Natural killer cell (primary cell): ENCODE measurements at regions of chr18 and their contacts with region 1.

Region 1: GRCh38 chr18:48777026-48777743 is 173.6 kb downstream of the SMAD7 start:
- DNase-seq: peak; percentile 76 to 85
- ATAC-seq: peak; percentile 82 to 96 (median 94)
- H3K4me3 ChIP-seq: no peak overlapping the region
- H3K4me3 Mint-ChIP-seq: no peak overlapping the region
- H3K27ac ChIP-seq: no peak overlapping the region
- H3K27ac Mint-ChIP-seq: peak overlapping the region in 1 of 2 donors; percentile 48
- H3K4me1 ChIP-seq: peaks cover 30% of the 10 kb centered on the region
- H3K4me1 Mint-ChIP-seq: peaks cover 0 to 22% of the 10 kb centered on the region in 2 donors
- H3K27me3 ChIP-seq: no peaks in the 10 kb centered on the region
- H3K27me3 Mint-ChIP-seq: peaks cover 0 to 7% of the 10 kb centered on the region in 2 donors
- CTCF ChIP-seq: peak; percentile 94

Region 2: DNA sequence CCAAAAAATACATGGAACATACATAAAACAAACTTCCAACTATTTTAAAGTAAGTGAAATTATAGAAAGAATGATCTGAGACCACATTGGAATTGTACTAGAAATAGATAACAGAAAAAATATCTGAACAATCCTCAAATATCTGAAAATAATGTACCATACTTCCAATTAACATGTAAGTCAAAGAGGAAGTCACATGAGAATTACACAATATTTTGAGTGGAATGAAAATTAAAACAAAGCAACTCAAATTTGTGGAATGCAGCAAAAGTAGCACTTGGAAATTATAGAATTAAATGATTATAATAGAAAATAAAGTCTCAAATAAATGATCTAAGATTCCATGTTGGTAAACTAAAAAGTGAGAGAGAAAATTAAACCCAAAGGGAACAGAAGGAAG is 276.7 kb before region 1 on chr18:
- intact Hi-C with region 1: no loop called
- DNase-seq: no peak
- ATAC-seq: no peak
- H3K4me3 ChIP-seq: no peak overlapping the region
- H3K4me3 Mint-ChIP-seq: no peak overlapping the region
- H3K27ac ChIP-seq: no peak overlapping the region
- H3K27ac Mint-ChIP-seq: no peak overlapping the region
- H3K4me1 ChIP-seq: no peaks in the 10 kb centered on the region
- H3K4me1 Mint-ChIP-seq: no peaks in the 10 kb centered on the region
- H3K27me3 ChIP-seq: no peaks in the 10 kb centered on the region
- H3K27me3 Mint-ChIP-seq: peaks cover 26 to 63% of the 10 kb centered on the region in 2 donors
- CTCF ChIP-seq: no peak

Region 3: GRCh38 chr18:48600456-48601090 is 176.6 kb before region 1 on chr18:
- intact Hi-C with region 1: no loop called
- DNase-seq: no peak
- ATAC-seq: peak in 2 of 3 donors; percentile 28 to 38
- H3K4me3 ChIP-seq: no peak overlapping the region
- H3K4me3 Mint-ChIP-seq: peak overlapping the region; percentile 2
- H3K27ac ChIP-seq: no peak overlapping the region
- H3K27ac Mint-ChIP-seq: peak overlapping the region in 1 of 2 donors; percentile 42
- H3K4me1 ChIP-seq: peaks cover 10% of the 10 kb centered on the region
- H3K4me1 Mint-ChIP-seq: peaks cover 16 to 17% of the 10 kb centered on the region in 2 donors
- H3K27me3 ChIP-seq: no peaks in the 10 kb centered on the region
- H3K27me3 Mint-ChIP-seq: no peaks in the 10 kb centered on the region
- CTCF ChIP-seq: no peak

Region 4: GRCh38 chr18:48842259-48843061 is 65.3 kb after region 1 on chr18:
- intact Hi-C with region 1: no loop called
- DNase-seq: peak; percentile 66 to 85
- ATAC-seq: peak; percentile 73 to 88 (median 83)
- H3K4me3 ChIP-seq: no peak overlapping the region
- H3K4me3 Mint-ChIP-seq: peak overlapping the region; percentile 73
- H3K27ac ChIP-seq: peak overlapping the region; percentile 96
- H3K27ac Mint-ChIP-seq: peak overlapping the region; percentile 94 to 100
- H3K4me1 ChIP-seq: peaks cover 83% of the 10 kb centered on the region
- H3K4me1 Mint-ChIP-seq: peaks cover 85 to 97% of the 10 kb centered on the region in 2 donors
- H3K27me3 ChIP-seq: no peaks in the 10 kb centered on the region
- H3K27me3 Mint-ChIP-seq: no peaks in the 10 kb centered on the region
- CTCF ChIP-seq: no peak

Region 5: DNA sequence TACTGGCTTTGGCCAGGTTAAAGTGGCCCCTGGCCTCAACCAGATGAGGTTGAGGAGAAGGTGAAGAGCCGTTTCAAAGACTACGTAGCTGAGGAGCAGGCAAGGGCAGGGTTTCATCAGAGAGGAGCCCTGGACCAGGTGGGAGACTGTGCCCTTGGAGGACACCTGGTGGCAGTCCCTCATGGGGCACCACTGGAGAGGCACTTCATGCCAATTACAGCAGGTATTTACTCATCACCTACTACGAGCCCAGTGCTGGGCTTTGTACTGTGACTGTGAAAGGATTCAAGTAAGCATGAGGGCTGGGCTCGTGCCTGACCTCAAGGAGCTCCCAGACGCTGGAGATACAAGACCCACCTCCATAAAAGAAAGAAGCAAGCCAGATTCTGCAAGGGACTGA is 136.0 kb after region 1 on chr18:
- intact Hi-C with region 1: loop called (anchors 1 kb)
- DNase-seq: peak in 1 of 2 donors; percentile 77
- ATAC-seq: peak; percentile 47 to 75 (median 48)
- H3K4me3 ChIP-seq: no peak overlapping the region
- H3K4me3 Mint-ChIP-seq: no peak overlapping the region
- H3K27ac ChIP-seq: no peak overlapping the region
- H3K27ac Mint-ChIP-seq: peak overlapping the region in 1 of 2 donors; percentile 16
- H3K4me1 ChIP-seq: peaks cover 35% of the 10 kb centered on the region
- H3K4me1 Mint-ChIP-seq: peaks cover 59 to 63% of the 10 kb centered on the region in 2 donors
- H3K27me3 ChIP-seq: no peaks in the 10 kb centered on the region
- H3K27me3 Mint-ChIP-seq: no peaks in the 10 kb centered on the region
- CTCF ChIP-seq: no peak

Region 6: GRCh38 chr18:49041435-49042245 is 264.5 kb after region 1 on chr18:
- intact Hi-C with region 1: loop called (anchors 2 kb)
- DNase-seq: peak in 1 of 2 donors; percentile 71
- ATAC-seq: peak; percentile 8 to 65 (median 63)
- H3K4me3 ChIP-seq: no peak overlapping the region
- H3K4me3 Mint-ChIP-seq: no peak overlapping the region
- H3K27ac ChIP-seq: no peak overlapping the region
- H3K27ac Mint-ChIP-seq: no peak overlapping the region
- H3K4me1 ChIP-seq: peaks cover 10% of the 10 kb centered on the region
- H3K4me1 Mint-ChIP-seq: peaks cover 4 to 22% of the 10 kb centered on the region in 2 donors
- H3K27me3 ChIP-seq: no peaks in the 10 kb centered on the region
- H3K27me3 Mint-ChIP-seq: no peaks in the 10 kb centered on the region
- CTCF ChIP-seq: peak; percentile 40

Region 7: GRCh38 chr18:49178736-49179135 is 401.6 kb after region 1 on chr18:
- intact Hi-C with region 1: loop called (anchors 5 kb)
- DNase-seq: peak in 1 of 2 donors; percentile 36
- ATAC-seq: no peak
- H3K4me3 ChIP-seq: no peak overlapping the region
- H3K4me3 Mint-ChIP-seq: no peak overlapping the region
- H3K27ac ChIP-seq: no peak overlapping the region
- H3K27ac Mint-ChIP-seq: no peak overlapping the region
- H3K4me1 ChIP-seq: no peaks in the 10 kb centered on the region
- H3K4me1 Mint-ChIP-seq: peaks cover 9 to 13% of the 10 kb centered on the region in 2 donors
- H3K27me3 ChIP-seq: no peaks in the 10 kb centered on the region
- H3K27me3 Mint-ChIP-seq: no peaks in the 10 kb centered on the region
- CTCF ChIP-seq: peak; percentile 31

Region 8: DNA sequence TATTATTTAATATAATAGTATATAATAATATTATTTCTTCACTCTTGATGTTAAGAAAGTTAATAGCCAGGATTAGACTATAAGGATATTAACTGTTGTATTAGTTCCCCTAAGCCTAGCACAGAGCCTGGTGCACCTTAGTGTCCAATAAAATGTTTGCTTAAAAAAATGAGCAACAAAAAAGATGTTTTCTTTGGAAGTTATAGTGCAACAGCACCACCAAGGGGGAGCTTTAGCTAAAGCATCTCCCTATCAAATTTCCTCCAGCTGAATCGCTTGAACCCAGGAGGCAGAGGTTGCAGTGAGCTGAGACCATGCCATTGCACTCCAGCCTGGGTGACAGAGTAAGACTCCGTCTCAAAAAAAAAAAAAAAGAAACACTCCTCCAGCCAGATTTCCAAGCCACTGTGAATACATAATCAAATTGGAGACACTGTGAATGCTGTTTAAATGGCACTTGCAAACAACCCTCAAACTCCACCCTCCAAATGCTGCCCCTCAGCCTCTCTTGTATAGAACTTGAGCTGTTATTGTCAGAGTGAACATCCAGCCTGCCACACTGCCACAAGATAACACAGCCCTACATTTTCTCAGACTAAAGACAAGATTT is 461.4 kb after region 1 on chr18:
- intact Hi-C with region 1: loop called (anchors 2 kb)
- DNase-seq: peak in 1 of 2 donors; percentile 39
- ATAC-seq: peak in 1 of 3 donors; percentile 47
- H3K4me3 ChIP-seq: no peak overlapping the region
- H3K4me3 Mint-ChIP-seq: no peak overlapping the region
- H3K27ac ChIP-seq: no peak overlapping the region
- H3K27ac Mint-ChIP-seq: no peak overlapping the region
- H3K4me1 ChIP-seq: no peaks in the 10 kb centered on the region
- H3K4me1 Mint-ChIP-seq: peaks cover 4 to 9% of the 10 kb centered on the region in 2 donors
- H3K27me3 ChIP-seq: no peaks in the 10 kb centered on the region
- H3K27me3 Mint-ChIP-seq: no peaks in the 10 kb centered on the region
- CTCF ChIP-seq: peak; percentile 34